ENCODE measurements at regions of chr7 and their contacts with region 1.

Region 1: DNA sequence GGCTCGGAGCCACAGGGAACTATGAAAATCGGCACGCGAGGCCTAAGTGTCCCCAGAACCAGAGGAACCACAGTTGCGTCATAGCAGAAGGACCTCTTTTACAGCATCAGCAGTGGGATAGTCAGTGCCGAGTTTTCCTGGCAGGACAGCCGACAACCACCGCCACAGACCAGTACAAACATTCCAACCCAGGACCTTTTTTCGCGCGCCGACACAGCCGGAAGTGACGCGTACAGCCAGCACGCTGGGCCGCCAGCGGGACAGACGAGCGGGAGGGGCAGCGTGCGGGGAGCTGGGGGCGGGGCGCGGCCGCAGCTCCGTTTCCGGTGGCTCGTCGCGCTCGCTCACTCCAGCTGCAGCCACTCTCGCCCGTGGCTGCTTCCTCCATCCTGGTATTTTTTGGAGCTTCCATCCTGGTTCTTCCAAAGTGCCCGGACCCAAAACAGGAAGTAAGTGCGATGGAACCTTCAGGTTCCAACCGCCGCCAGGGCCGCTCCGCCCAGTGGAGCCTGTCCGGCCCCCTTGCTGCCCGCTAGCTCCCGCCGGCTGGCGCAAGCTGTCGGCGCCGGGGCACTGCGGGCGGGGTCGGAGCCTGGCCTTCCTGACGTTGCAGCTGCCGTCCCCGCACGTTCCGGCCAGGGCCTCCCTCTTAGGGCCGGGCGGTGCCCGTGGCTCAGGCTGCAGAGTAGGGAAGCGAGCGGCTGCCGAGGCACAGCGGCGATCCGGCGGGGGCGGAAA is at the start of gene DMTF1:
- DNase-seq: peak; percentile 95 to 97 (median 96)
- ATAC-seq: peak; percentile 97 to 98 (median 97)
- H3K4me3 ChIP-seq: peak within 1 kb of the TSS; percentile 61 to 89 (median 80)
- H3K27ac ChIP-seq: peak within 1 kb of the TSS; percentile 91 to 99 (median 96)
- H3K4me1 ChIP-seq: peaks cover 7 to 58% (median 44%) of the 10 kb centered on the region in 12 donors
- H3K27me3 ChIP-seq: no peaks in the 10 kb centered on the region
- CTCF ChIP-seq: peak in 2 of 12 donors; percentile 7 to 24
- POLR2A ChIP-seq: peak in 1 of 2 donors; percentile 70
- total RNA-seq, gene DMTF1: 17.7 to 43.3 (median 22.3) TPM

Region 2: DNA sequence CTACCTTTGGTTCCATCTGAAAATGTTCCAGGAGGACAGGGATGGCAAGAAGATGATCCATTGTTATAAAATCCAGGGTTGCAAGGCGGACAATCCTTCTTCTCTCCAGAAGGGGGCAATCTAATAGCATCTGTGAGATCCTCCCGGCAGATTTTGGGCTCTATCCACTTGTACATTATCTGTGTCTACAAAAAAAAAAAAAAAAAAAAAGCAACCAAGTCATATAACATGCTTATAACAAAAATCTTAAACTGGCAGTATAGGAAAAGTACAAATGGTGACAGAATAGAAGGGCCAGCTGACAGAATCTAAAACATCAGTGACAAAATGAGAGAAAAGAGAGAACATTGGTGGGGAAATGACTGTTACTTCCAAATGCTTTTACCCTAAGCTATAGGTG is 225.5 kb before region 1 on chr7:
- intact Hi-C with region 1: loop called in 3 of 10 experiments (anchors 5 kb)
- DNase-seq: no peak
- ATAC-seq: peak in 2 of 4 donors; percentile 38 to 59
- H3K4me3 ChIP-seq: no peak overlapping the region
- H3K27ac ChIP-seq: no peak overlapping the region
- H3K4me1 ChIP-seq: peaks cover 0 to 5% (median 2%) of the 10 kb centered on the region in 12 donors
- H3K27me3 ChIP-seq: no peaks in the 10 kb centered on the region
- CTCF ChIP-seq: peak; percentile 37 to 74 (median 64)
- POLR2A ChIP-seq: no peak

Region 3: DNA sequence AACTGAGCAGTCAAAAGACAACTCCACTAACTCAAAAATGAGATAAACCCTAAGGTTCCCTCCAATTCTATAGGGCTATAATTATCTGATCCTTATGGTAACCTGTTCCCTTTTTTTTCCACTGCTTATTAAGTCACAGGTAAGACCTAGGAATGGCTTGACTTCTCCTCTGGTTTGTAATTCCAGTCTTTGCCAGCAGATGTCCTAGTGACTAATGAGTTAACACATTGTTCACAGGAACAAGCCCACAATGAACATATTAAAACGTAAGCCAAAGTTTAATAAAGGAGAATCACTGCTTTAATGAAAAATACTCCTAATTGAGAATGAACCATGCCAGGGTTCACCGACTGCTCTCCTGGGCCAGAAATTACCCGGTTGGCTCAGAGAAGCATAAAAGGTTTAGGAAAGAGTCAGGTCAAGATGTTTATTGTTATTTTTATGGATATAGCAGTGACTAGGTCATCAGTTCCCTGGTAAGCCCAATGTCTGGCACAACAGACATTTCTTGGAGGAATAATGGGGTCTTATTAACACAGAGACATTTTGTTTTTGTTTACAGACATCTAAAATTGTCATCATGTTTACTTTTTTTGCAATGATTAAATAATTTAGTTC is 213.0 kb before region 1 on chr7:
- intact Hi-C with region 1: loop called in 9 of 10 experiments (anchors 1 to 5 kb)
- DNase-seq: peak in 2 of 5 donors; percentile 26 to 29
- ATAC-seq: peak in 3 of 4 donors; percentile 52 to 76 (median 54)
- H3K4me3 ChIP-seq: no peak overlapping the region
- H3K27ac ChIP-seq: no peak overlapping the region
- H3K4me1 ChIP-seq: no peaks in the 10 kb centered on the region
- H3K27me3 ChIP-seq: no peaks in the 10 kb centered on the region
- CTCF ChIP-seq: peak; percentile 54 to 76 (median 72)
- POLR2A ChIP-seq: no peak

Region 4: DNA sequence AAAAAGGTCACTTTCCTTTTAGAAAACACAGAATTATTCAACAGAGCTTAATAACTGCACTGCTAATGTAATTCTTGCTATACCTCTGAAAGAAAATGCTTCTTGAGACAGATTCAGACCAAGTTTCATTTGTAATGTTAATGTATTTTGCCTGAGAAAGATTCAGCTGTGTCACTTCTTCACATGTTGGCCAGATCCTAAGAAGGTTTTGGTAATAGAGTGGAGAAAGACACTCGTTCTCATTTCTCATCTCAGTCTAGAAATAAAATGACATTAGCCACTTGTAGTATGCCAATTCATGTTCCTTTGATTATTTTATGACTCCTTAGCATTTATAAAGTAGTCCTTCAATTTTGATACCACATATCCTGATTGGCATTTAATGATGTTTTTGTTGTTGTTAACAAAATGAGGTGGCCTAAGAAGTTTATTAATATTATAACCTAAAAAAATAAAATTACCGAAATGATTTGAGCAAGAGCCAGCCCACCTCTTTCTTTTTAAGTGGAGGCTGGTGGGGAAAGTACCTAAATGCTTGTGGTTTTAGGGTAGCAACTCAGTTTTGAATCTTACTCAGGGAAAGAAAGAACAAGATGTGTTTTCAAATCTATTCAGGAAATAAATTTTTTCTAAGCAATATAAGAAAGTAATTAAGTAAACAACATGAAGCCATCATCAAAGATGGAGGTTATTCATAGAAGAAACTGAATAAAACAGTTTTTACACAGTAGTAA is 76.4 kb before region 1 on chr7:
- intact Hi-C with region 1: loop called in 1 of 10 experiments (anchors 10 kb)
- DNase-seq: no peak
- ATAC-seq: no peak
- H3K4me3 ChIP-seq: no peak overlapping the region
- H3K27ac ChIP-seq: no peak overlapping the region
- H3K4me1 ChIP-seq: no peaks in the 10 kb centered on the region
- H3K27me3 ChIP-seq: no peaks in the 10 kb centered on the region
- CTCF ChIP-seq: no peak
- POLR2A ChIP-seq: no peak

Region 5: GRCh38 chr7:87219545-87220025 is 67.3 kb after region 1 on chr7 and contains the start of gene TMEM243:
- intact Hi-C with region 1: loop called in 7 of 10 experiments (anchors 2 to 10 kb)
- DNase-seq: peak; percentile 83 to 92 (median 86)
- ATAC-seq: peak; percentile 74 to 93 (median 90)
- H3K4me3 ChIP-seq: peak within 1 kb of the TSS; percentile 65 to 94 (median 86)
- H3K27ac ChIP-seq: peak within 1 kb of the TSS; percentile 66 to 91 (median 87)
- H3K4me1 ChIP-seq: peaks cover 0 to 48% (median 12%) of the 10 kb centered on the region in 12 donors
- H3K27me3 ChIP-seq: peaks cover 0 to 15% (median 0%) of the 10 kb centered on the region in 9 donors
- CTCF ChIP-seq: peak in 5 of 12 donors; percentile 3 to 35 (median 19)
- POLR2A ChIP-seq: peak in 1 of 2 donors; percentile 51
- total RNA-seq, gene TMEM243: 1.8 to 13.1 (median 4.0) TPM

Region 6: GRCh38 chr7:87345166-87345927 is 193.1 kb after region 1 on chr7 and contains the start of gene CROT:
- intact Hi-C with region 1: loop called in 2 of 10 experiments (anchors 10 kb)
- DNase-seq: peak; percentile 97 to 99 (median 98)
- ATAC-seq: peak; percentile 100
- H3K4me3 ChIP-seq: peak within 1 kb of the TSS; percentile 48 to 92 (median 73)
- H3K27ac ChIP-seq: peak within 1 kb of the TSS; percentile 29 to 92 (median 84)
- H3K4me1 ChIP-seq: peaks cover 0 to 33% (median 13%) of the 10 kb centered on the region in 12 donors
- H3K27me3 ChIP-seq: no peaks in the 10 kb centered on the region
- CTCF ChIP-seq: peak in 2 of 12 donors; percentile 2 to 12
- POLR2A ChIP-seq: peak in 1 of 2 donors; percentile 92
- total RNA-seq, gene CROT: 6.8 to 10.2 (median 9.1) TPM

Region 7: GRCh38 chr7:87370660-87371180 is 218.4 kb after region 1 on chr7:
- intact Hi-C with region 1: no loop called
- DNase-seq: no peak
- ATAC-seq: no peak
- H3K4me3 ChIP-seq: no peak overlapping the region
- H3K27ac ChIP-seq: no peak overlapping the region
- H3K4me1 ChIP-seq: no peaks in the 10 kb centered on the region
- H3K27me3 ChIP-seq: no peaks in the 10 kb centered on the region
- CTCF ChIP-seq: no peak
- POLR2A ChIP-seq: no peak

Measured in heart left ventricle (tissue), 16 donors.